ENCODE measurements at regions of chr5 and their contacts with region 1.

Region 1: GRCh38 chr5:137735555-137736284 is at the start of gene KLHL3:
- DNase-seq: peak; percentile 29
- CTCF ChIP-seq: peak; percentile 46

Region 2: DNA sequence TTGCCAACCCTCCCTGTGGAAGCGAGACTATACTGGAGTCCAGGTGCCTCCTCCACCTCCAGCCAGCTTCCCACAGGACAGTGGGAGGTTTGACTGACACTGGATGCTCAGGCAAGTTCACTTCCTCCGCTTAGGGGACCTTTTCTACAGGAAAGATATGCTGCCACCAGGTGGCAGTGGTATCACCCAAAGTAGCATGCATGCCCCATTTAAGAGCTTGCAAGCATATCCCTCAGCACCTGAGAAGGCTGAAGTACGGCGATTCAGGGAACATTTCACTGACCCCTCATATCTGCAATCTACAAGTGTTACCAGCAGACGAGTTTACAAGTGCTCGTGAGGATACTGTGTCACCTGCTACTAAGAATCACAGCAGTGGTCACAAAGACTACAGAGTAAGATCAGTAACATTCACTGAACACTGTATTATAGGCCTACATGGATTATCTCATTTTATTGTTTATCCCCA is 75.3 kb before region 1 on chr5:
- in situ Hi-C with region 1: loop called (anchors 10 kb)
- DNase-seq: peak; percentile 59
- CTCF ChIP-seq: peak; percentile 79